ENCODE measurements at regions of chr4 and their contacts with region 1.

Region 1: GRCh38 chr4:186676531-186677161 is 47.0 kb downstream of the FAT1 start:
- DNase-seq: no peak
- ATAC-seq: peak; percentile 91 to 96 (median 94)
- H3K4me3 ChIP-seq: peak overlapping the region in 6 of 12 donors; percentile 4 to 33 (median 12)
- H3K27ac ChIP-seq: peak overlapping the region in 11 of 12 donors; percentile 17 to 76 (median 63)
- H3K4me1 ChIP-seq: peaks cover 0 to 36% (median 16%) of the 10 kb centered on the region in 12 donors
- H3K27me3 ChIP-seq: no peaks in the 10 kb centered on the region
- CTCF ChIP-seq: no peak
- POLR2A ChIP-seq: no peak

Region 2: DNA sequence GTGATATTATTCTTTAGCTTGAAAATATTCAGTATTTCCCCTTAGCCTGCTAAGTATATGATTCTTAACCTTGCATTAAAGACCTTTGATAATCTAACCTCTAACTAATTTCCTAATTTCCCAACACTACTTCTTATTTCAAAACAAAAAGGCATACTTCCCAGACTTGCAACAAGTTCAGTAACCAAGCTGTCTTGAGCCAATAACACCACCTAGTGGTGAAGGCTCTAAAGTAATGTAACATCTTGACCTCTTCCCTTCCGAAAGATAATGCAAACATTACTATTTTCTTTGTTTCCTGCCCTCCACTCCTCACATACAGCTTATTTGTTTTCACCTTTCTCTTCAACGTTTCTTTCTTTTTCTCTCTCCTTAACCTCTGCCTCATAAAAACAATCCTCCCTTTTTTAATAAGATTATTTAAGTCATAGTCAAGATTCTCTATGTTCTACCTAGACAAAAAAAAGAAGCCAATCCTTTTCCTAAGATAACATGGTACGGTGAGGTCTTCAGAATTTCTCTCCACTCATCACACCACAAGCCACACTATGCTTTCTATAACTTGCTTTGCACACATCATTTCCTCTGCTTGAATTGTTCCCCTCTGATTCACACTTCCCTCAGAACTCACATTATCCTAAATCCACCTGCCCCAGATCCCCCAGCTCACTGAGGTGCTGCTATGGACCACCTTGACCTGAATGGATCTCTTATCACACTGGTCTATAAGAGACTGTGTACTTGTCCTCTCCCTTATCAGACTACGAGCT is 43.5 kb after region 1 on chr4:
- intact Hi-C with region 1: loop called in 5 of 10 experiments (anchors 2 to 5 kb)
- DNase-seq: no peak
- ATAC-seq: no peak
- H3K4me3 ChIP-seq: no peak overlapping the region
- H3K27ac ChIP-seq: no peak overlapping the region
- H3K4me1 ChIP-seq: peaks cover 0 to 29% (median 4%) of the 10 kb centered on the region in 12 donors
- H3K27me3 ChIP-seq: peaks cover 0 to 39% (median 0%) of the 10 kb centered on the region in 9 donors
- CTCF ChIP-seq: peak in 8 of 12 donors; percentile 9 to 46 (median 27)
- POLR2A ChIP-seq: no peak